Lower leg skin (tissue), 4 donors: ENCODE measurements at regions of chr16 and their contacts with region 1.

Region 1: GRCh38 chr16:18801197-18801972 is at the start of gene ARL6IP1:
- DNase-seq: peak; percentile 99 to 100
- H3K4me3 ChIP-seq: peak within 1 kb of the TSS; percentile 90
- CTCF ChIP-seq: peak in 1 of 3 donors; percentile 98
- POLR2A ChIP-seq: peak in 1 of 2 donors; percentile 92
- total RNA-seq, gene ARL6IP1: 97.6 to 186 (median 124) TPM

Region 2: DNA sequence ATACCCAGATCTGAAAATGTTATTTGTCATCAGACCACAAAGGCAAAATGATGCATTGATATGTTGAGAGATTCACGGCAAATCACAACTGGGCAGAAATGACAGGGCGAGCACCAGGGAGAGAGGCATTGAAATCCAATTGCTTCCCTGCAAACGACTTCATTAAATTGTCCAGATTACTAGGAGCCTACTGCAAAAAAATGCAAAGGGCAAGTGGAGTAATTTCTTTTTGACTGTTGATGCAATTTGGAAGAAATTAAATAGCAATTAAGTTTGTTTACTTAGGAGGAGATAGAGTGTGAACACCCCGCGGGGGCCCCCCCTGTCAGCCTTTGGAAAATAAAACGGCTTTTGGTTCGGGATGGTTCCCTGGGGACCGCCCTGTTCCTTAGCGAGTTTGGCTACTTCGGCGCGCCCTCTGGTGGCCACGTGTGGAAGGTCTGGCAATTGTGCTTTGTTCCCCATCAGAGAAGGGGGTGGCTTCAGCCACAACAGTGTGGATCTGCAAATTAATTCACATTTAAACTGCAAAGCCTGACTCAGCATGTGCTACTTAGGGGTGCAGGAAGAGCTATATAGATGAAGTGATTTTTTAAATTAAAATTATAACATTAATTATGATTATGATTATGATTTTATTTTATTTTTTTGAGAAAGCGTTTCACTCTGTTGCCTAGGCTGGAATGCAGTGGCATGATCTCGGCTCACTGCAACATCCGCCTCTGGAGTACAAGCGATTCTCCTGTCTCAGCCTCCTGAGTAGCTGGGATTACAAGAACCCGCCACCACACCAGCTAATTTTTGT is 167.9 kb after region 1 on chr16:
- intact Hi-C with region 1: loop called (anchors 5 kb)
- DNase-seq: peak; percentile 86 to 97
- H3K4me3 ChIP-seq: no peak overlapping the region
- CTCF ChIP-seq: peak in 1 of 3 donors; percentile 44
- POLR2A ChIP-seq: no peak